CD4-positive, alpha-beta memory T cell (primary cell): ENCODE measurements at regions of chr3 and their contacts with region 1.

Region 1: GRCh38 chr3:58305882-58306711 is at the starts of genes HTD2 and RPP14:
- DNase-seq: peak; percentile 97 to 99 (median 98)
- H3K4me3 ChIP-seq: peak within 1 kb of the TSS; percentile 79 to 80
- H3K4me3 Mint-ChIP-seq: peak within 1 kb of the TSS; percentile 96 to 100 (median 98)
- H3K27ac ChIP-seq: peak within 1 kb of the TSS; percentile 93
- H3K27ac Mint-ChIP-seq: peak within 1 kb of the TSS; percentile 96 to 100 (median 100)
- H3K4me1 ChIP-seq: peaks cover 27% of the 10 kb centered on the region
- H3K4me1 Mint-ChIP-seq: peaks cover 23 to 37% (median 30%) of the 10 kb centered on the region in 4 donors
- H3K27me3 ChIP-seq: no peaks in the 10 kb centered on the region
- H3K27me3 Mint-ChIP-seq: peaks cover 3 to 8% of the 10 kb centered on the region in 2 donors
- total RNA-seq, gene HTD2: 9.2 to 10.5 TPM
- total RNA-seq, gene RPP14: 15.1 to 15.4 TPM

Region 2: DNA sequence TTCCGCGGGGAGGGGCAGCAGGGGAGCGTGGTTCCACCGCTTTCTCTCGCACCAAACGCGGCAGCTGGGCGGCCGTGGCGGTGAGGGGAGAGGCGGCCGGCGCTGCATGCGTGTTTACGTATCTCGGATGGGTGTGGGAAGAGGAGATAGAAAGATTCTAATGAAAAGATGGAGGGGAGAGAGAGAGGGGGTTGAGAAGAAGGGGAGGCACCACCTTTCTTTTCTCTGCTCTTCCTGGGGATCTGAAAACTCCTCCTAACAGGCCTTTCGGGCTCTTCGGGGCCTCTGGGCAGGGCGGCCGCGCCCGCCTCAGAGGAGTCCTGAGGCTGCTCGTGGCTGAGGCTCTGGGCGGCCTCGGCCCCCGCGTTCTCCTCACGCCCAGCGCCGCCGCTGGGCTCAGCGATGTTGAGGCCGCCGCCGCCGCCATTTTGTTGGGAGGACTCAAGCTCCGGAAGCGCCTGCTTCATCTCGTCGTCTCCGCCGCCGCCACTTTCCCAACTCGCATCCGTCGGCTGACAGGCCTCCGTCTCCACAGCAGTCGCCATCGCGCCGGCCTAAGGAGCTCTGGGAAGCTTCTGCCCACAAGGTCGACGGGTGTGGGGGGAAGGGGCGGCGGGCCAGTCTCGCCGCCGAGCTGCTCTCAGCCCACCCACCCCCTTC is 1623.5 kb before region 1 on chr3:
- CTCF ChIA-PET with region 1: no interaction called
- POLR2A ChIA-PET with region 1: no interaction called
- intact Hi-C with region 1: loop called (anchors 5 kb)
- DNase-seq: peak; percentile 79 to 86 (median 85)
- H3K4me3 ChIP-seq: peak overlapping the region; percentile 76 to 90
- H3K4me3 Mint-ChIP-seq: peak overlapping the region; percentile 91 to 98 (median 94)
- H3K27ac ChIP-seq: peak overlapping the region; percentile 96
- H3K27ac Mint-ChIP-seq: peak overlapping the region; percentile 93 to 98 (median 96)
- H3K4me1 ChIP-seq: peaks cover 55% of the 10 kb centered on the region
- H3K4me1 Mint-ChIP-seq: peaks cover 28 to 59% (median 42%) of the 10 kb centered on the region in 4 donors
- H3K27me3 ChIP-seq: no peaks in the 10 kb centered on the region
- H3K27me3 Mint-ChIP-seq: no peaks in the 10 kb centered on the region

Region 3: DNA sequence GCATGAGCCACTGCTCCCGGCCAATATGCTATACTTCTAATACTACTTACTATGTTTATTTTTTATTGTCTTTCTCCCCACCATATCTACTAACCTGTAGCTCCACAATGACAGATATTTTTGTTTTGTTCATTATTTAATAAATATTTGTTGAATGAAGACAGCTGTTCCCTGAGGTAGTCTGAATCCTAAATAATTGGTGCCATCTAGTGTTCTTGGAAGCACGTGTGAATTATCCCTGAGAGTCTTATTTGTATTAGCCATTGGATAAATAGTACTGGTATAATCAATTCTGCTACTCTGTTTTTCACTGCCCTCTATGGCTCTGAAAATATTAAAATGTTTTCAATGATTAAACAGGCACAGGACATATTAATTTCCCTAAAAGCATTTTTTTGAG is 1084.2 kb before region 1 on chr3:
- CTCF ChIA-PET with region 1: no interaction called
- POLR2A ChIA-PET with region 1: no interaction called
- intact Hi-C with region 1: no loop called
- DNase-seq: no peak
- H3K4me3 ChIP-seq: no peak overlapping the region
- H3K4me3 Mint-ChIP-seq: no peak overlapping the region
- H3K27ac ChIP-seq: no peak overlapping the region
- H3K27ac Mint-ChIP-seq: no peak overlapping the region
- H3K4me1 ChIP-seq: peaks cover 2% of the 10 kb centered on the region
- H3K4me1 Mint-ChIP-seq: peaks cover 0 to 4% (median 2%) of the 10 kb centered on the region in 4 donors
- H3K27me3 ChIP-seq: no peaks in the 10 kb centered on the region
- H3K27me3 Mint-ChIP-seq: no peaks in the 10 kb centered on the region

Region 4: DNA sequence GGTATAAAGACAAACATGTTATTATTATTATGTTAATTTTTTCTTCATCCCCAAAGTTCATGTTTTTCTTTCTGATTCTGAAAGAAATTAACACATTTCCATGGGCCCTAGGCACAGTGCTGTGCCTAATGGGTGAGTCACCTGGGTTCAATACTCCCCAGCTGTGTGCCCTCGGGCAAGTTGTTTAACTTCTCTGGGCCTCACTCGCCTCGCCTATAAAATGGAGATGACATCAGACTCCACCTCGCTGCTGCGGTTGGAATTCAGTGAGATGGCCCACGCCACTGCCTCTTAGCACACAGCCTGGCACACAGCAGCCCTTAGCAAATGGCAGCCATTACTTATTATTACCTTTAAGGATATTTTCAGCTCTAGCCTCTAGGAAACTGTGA is 117.9 kb before region 1 on chr3:
- CTCF ChIA-PET with region 1: interaction called, 12 read pairs
- POLR2A ChIA-PET with region 1: no interaction called
- intact Hi-C with region 1: no loop called
- DNase-seq: no peak
- H3K4me3 ChIP-seq: no peak overlapping the region
- H3K4me3 Mint-ChIP-seq: no peak overlapping the region
- H3K27ac ChIP-seq: no peak overlapping the region
- H3K27ac Mint-ChIP-seq: no peak overlapping the region
- H3K4me1 ChIP-seq: no peaks in the 10 kb centered on the region
- H3K4me1 Mint-ChIP-seq: peaks cover 0 to 4% (median 3%) of the 10 kb centered on the region in 4 donors
- H3K27me3 ChIP-seq: no peaks in the 10 kb centered on the region
- H3K27me3 Mint-ChIP-seq: no peaks in the 10 kb centered on the region

Region 5: DNA sequence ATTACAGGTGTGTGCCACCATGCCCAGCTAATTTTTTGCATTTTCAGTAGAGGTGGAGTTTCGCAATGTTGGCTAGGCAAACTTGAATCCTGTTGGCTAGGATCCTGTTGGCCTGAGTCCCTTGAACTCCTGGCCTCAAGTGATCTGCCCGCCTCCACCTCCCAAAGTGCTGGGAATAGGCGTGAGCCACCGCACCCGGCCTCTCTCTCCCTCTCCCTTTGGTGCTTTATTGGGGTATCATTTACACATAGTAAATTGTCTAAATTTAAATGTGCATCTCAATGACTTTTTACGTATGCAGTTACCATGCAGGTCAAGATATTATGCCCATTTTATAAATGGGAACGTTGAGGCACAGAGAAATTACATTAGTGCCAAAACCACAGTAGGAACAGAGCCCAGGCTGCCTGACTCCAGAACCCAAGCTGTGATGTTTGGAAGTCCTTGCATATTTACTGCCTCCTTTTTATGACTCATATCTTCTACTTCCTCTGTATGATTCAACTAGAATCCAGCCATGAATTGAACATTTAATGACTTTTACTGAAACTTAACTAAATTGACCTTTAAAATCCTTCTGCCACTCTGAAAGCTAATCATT is 34.1 kb before region 1 on chr3:
- CTCF ChIA-PET with region 1: no interaction called
- POLR2A ChIA-PET with region 1: no interaction called
- intact Hi-C with region 1: no loop called
- DNase-seq: no peak
- H3K4me3 ChIP-seq: no peak overlapping the region
- H3K4me3 Mint-ChIP-seq: no peak overlapping the region
- H3K27ac ChIP-seq: no peak overlapping the region
- H3K27ac Mint-ChIP-seq: no peak overlapping the region
- H3K4me1 ChIP-seq: no peaks in the 10 kb centered on the region
- H3K4me1 Mint-ChIP-seq: no peaks in the 10 kb centered on the region
- H3K27me3 ChIP-seq: no peaks in the 10 kb centered on the region
- H3K27me3 Mint-ChIP-seq: no peaks in the 10 kb centered on the region

Region 6: DNA sequence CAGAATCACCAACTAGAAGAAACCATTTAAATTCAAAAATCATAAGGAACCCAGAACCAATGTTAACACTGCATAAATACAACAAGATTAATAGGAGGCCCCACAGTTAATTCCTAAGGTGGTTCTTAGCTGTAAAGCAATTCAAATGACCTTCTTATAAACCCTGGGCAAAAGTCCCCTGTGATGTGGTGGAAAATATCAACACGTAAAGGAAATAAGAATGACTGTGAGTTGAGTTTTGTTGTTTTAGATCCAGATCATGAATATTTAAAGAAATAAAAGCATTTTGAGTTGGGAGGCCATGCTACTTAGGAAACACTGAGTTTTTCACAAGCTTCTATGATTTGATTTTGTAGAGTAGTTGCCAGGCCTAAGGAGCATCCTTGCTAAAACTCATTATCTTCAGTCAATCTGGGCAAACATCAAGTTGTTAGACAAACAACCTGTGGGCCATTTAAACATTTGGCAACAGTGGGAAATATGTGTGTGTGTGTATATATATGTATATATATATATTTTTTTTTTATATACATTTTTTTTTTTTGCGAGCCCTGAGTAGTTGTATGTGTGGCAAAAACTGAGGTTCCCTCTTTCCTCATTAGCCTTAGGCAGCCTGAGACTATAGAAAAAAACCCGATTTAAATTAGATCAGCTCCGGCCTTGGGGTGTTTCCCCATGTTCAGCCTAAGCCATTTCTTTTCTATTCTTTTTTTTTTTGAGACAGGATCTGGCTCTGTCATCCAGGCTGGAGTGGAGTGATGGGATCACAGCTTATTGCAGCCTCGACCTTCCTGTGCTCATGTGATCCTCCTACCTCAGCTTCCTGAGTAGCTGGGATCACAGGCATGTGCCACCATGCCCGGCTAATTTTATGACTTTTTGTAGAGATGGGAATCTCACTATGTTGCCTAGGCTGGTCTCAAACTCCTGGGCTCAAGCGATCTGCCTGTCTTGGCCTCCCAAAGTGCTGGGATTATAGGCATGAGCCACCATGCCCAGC is 18.6 kb after region 1 on chr3:
- CTCF ChIA-PET with region 1: interaction called, 62 read pairs
- POLR2A ChIA-PET with region 1: interaction called, 14 read pairs
- intact Hi-C with region 1: loop called (anchors 2 kb)
- DNase-seq: peak; percentile 15 to 51 (median 39)
- H3K4me3 ChIP-seq: no peak overlapping the region
- H3K4me3 Mint-ChIP-seq: peak overlapping the region in 1 of 8 donors; percentile 7
- H3K27ac ChIP-seq: no peak overlapping the region
- H3K27ac Mint-ChIP-seq: peak overlapping the region; percentile 76 to 87 (median 79)
- H3K4me1 ChIP-seq: peaks cover 18% of the 10 kb centered on the region
- H3K4me1 Mint-ChIP-seq: peaks cover 7 to 25% (median 17%) of the 10 kb centered on the region in 4 donors
- H3K27me3 ChIP-seq: no peaks in the 10 kb centered on the region
- H3K27me3 Mint-ChIP-seq: no peaks in the 10 kb centered on the region

Region 7: GRCh38 chr3:58433400-58434169 is 127.5 kb after region 1 on chr3 and contains the start of gene PDHB:
- CTCF ChIA-PET with region 1: interaction called, 18 read pairs
- POLR2A ChIA-PET with region 1: interaction called, 31 read pairs
- intact Hi-C with region 1: loop called (anchors 1 kb)
- DNase-seq: peak; percentile 86 to 91 (median 89)
- H3K4me3 ChIP-seq: peak within 1 kb of the TSS; percentile 69 to 82
- H3K4me3 Mint-ChIP-seq: peak within 1 kb of the TSS; percentile 91 to 94 (median 92)
- H3K27ac ChIP-seq: peak within 1 kb of the TSS; percentile 77
- H3K27ac Mint-ChIP-seq: peak within 1 kb of the TSS; percentile 88 to 98 (median 91)
- H3K4me1 ChIP-seq: peaks cover 25% of the 10 kb centered on the region
- H3K4me1 Mint-ChIP-seq: peaks cover 16 to 36% (median 25%) of the 10 kb centered on the region in 4 donors
- H3K27me3 ChIP-seq: no peaks in the 10 kb centered on the region
- H3K27me3 Mint-ChIP-seq: no peaks in the 10 kb centered on the region
- total RNA-seq, gene PDHB: 55.0 to 58.6 TPM

Region 8: DNA sequence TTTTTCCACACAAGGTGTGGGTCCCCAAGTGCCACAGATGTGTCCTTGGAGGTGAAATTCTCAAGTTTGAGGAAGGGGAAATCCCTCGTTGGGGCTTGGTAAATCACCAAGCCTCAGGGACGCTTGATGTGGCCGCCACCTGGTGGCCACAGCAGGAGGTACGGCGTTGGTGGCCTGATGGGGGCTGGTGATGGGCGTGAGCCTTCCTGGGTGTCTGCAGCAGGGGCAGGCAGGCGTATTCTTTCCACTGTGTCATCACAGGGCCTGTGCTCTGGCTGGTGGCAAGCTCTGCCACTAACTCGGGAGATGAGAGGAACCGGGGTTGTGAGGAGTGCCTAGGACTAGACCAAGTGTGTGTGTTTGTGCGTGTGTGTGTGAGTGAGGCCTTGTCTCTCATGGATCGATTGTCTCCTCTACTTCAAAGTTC is 226.7 kb after region 1 on chr3:
- CTCF ChIA-PET with region 1: interaction called, 8 read pairs
- POLR2A ChIA-PET with region 1: interaction called, 5 read pairs
- intact Hi-C with region 1: loop called (anchors 1 kb)
- DNase-seq: peak; percentile 71 to 79 (median 75)
- H3K4me3 ChIP-seq: no peak overlapping the region
- H3K4me3 Mint-ChIP-seq: no peak overlapping the region
- H3K27ac ChIP-seq: no peak overlapping the region
- H3K27ac Mint-ChIP-seq: peak overlapping the region in 6 of 7 donors; percentile 16 to 87 (median 69)
- H3K4me1 ChIP-seq: peaks cover 9% of the 10 kb centered on the region
- H3K4me1 Mint-ChIP-seq: peaks cover 4 to 8% (median 7%) of the 10 kb centered on the region in 4 donors
- H3K27me3 ChIP-seq: no peaks in the 10 kb centered on the region
- H3K27me3 Mint-ChIP-seq: no peaks in the 10 kb centered on the region